ENCODE measurements at regions of chr7 and their contacts with region 1.

Region 1: GRCh38 chr7:143901668-143902331 is at the start of gene TCAF1:
- DNase-seq: peak; percentile 97
- H3K4me3 ChIP-seq: peak within 1 kb of the TSS; percentile 53 to 68 (median 64)
- H3K27ac ChIP-seq: peak within 1 kb of the TSS; percentile 89 to 96 (median 93)
- H3K4me1 ChIP-seq: peaks cover 11 to 34% (median 20%) of the 10 kb centered on the region in 4 donors
- H3K27me3 ChIP-seq: no peaks in the 10 kb centered on the region
- CTCF ChIP-seq: peak in 4 of 5 experiments; percentile 8 to 51 (median 22)
- EP300 ChIP-seq: no peak
- POLR2A ChIP-seq: peak; percentile 84
- total RNA-seq, gene TCAF1: 8.6 to 38.6 (median 33.1) TPM

Region 2: DNA sequence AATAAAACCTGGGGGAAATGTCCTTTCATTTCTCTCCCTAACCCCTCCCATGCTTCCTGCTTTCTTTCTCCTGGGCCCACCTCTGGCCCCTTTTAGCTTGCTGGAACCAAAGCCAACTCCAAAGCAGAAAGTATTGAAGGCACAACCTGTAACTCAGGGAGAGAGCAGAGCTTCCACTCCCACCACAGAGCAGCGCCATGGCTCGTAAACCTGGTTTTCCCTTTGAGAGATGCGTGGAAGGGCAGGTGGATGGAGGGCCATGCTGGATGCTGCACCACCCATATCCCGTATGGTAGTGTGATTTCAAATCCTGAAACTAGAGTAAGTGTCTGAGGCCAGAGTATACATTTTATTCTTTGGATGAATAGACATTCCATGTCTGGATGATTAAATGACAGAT is 20.9 kb before region 1 on chr7:
- in situ Hi-C with region 1: no loop called
- intact Hi-C with region 1: loop called (anchors 2 kb)
- DNase-seq: no peak
- H3K4me3 ChIP-seq: no peak overlapping the region
- H3K27ac ChIP-seq: no peak overlapping the region
- H3K4me1 ChIP-seq: peaks cover 0 to 9% (median 4%) of the 10 kb centered on the region in 4 donors
- H3K27me3 ChIP-seq: no peaks in the 10 kb centered on the region
- CTCF ChIP-seq: no peak
- EP300 ChIP-seq: no peak
- POLR2A ChIP-seq: no peak

Measured in transverse colon (tissue), 4 donors.